Activated naive CD4-positive, alpha-beta T cell treated with anti-CD3 and anti-CD28 coated beads, Interleukin-2, amount 10 ng/mL, durations not matched to agents 7 days and 5 days (primary cell): ENCODE measurements at regions of chr9 and their contacts with region 1.

Region 1: GRCh38 chr9:114738581-114739316 is 56.8 kb upstream of the TEX48 start:
- DNase-seq: peak; percentile 79
- H3K4me3 Mint-ChIP-seq: no peak overlapping the region
- H3K27ac Mint-ChIP-seq: peak overlapping the region; percentile 88
- H3K4me1 Mint-ChIP-seq: peaks cover 70% of the 10 kb centered on the region
- H3K27me3 Mint-ChIP-seq: no peaks in the 10 kb centered on the region

Region 2: DNA sequence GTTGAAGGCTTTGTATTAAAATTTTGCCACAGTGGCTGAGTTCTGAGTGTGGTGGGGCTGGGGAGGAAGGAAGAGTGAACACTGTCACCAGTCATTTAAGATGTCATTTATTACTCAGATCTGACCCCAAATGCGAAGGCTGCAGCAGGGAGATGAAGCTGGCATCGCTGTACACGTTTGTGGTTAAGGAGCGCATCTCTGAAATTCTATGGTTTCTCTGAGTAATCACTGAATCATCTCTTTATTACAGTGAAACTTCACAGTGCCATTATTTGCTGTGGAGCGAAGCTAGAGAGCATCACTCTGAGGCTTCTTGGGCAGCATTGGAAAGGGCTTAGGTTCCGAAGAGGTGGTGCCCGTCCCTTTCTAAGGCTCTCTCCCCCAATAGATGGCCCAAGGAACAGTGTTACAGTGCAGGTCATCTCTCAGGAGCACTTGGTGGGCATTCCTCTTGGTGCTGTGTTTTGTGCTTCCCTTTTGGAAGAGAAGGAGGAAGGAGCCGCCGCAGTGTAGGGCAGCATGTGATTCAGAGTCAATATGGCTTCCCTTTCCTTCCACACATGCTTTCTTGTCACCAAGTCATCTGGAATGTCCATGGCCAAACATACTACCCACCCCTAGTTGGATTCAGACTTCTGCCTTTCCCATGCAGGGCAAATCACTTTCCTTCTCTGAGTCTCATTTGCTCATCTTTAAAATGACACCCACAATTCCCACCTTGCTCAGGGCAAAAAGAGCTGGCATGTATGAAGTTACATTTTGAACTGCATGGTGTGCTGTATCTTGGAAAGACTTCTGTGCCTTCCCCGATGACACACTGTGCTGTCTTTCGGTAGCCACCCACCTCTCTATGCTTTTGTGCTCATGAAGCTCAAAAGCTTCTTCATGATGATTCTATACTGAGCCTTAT is 47.4 kb before region 1 on chr9:
- CTCF ChIA-PET with region 1: interaction called, 46 read pairs
- DNase-seq: peak; percentile 82
- H3K4me3 Mint-ChIP-seq: peak overlapping the region; percentile 42
- H3K27ac Mint-ChIP-seq: peak overlapping the region; percentile 96
- H3K4me1 Mint-ChIP-seq: peaks cover 97% of the 10 kb centered on the region
- H3K27me3 Mint-ChIP-seq: no peaks in the 10 kb centered on the region

Region 3: DNA sequence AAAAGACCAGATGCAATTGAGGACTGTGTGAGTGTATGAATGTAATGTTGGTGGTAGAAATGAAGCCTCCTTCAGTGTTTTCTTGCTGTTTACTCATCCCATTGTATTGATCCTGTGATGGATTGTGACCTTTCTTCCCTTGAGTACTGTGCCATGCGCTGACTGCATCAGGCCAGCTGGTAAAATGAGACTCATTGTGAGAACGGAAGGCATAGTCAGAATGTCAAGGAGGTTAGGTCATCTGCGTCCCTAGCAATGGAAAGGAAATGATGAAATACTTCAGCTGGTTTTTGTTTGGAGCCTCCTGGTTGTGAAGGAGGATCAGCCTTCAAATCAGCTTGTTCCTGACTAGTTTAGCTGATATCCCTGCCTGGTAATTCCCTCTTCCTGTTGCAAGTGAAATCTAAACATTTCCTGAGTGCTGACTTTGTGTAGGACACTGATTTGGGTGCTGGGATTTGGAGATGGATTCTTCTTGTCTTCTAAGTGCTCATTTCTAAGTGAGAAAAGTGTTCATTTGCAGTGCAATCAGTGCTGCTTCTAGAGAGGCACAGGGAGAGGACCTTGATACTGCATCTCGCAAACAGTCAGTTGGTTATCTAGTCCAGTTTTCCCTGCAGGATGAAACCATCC is 156.2 kb after region 1 on chr9:
- CTCF ChIA-PET with region 1: interaction called, 16 read pairs
- DNase-seq: no peak
- H3K4me3 Mint-ChIP-seq: no peak overlapping the region
- H3K27ac Mint-ChIP-seq: peak overlapping the region; percentile 77
- H3K4me1 Mint-ChIP-seq: peaks cover 14% of the 10 kb centered on the region
- H3K27me3 Mint-ChIP-seq: no peaks in the 10 kb centered on the region

Region 4: GRCh38 chr9:115008536-115009270 is 270.0 kb after region 1 on chr9:
- CTCF ChIA-PET with region 1: interaction called, 32 read pairs
- DNase-seq: no peak
- H3K4me3 Mint-ChIP-seq: no peak overlapping the region
- H3K27ac Mint-ChIP-seq: no peak overlapping the region
- H3K4me1 Mint-ChIP-seq: peaks cover 61% of the 10 kb centered on the region
- H3K27me3 Mint-ChIP-seq: no peaks in the 10 kb centered on the region

Region 5: DNA sequence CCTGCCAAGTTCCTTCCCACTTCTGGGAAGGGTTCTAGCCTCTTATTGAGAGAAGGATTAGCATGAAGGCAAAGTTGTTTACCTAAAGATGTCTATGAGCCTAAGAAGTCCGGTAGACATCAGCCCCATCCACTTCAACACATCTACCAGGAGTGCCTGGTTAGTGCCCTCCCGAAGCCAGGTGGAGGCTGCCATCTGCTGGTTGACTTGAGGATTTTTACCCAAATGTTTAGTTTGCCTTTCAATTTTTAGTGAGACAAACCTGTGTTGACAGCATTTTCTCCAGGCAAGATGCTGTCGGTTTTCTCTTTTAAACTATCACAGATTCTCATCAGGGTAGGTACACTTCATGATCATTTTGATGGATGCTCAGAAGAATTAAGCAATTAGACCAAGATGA is 275.2 kb after region 1 on chr9:
- CTCF ChIA-PET with region 1: interaction called, 51 read pairs
- DNase-seq: peak; percentile 89
- H3K4me3 Mint-ChIP-seq: no peak overlapping the region
- H3K27ac Mint-ChIP-seq: peak overlapping the region; percentile 76
- H3K4me1 Mint-ChIP-seq: peaks cover 46% of the 10 kb centered on the region
- H3K27me3 Mint-ChIP-seq: peaks cover 13% of the 10 kb centered on the region